HepG2 (cell line): ENCODE measurements at regions of chr16 and their contacts with region 1.

Region 1: DNA sequence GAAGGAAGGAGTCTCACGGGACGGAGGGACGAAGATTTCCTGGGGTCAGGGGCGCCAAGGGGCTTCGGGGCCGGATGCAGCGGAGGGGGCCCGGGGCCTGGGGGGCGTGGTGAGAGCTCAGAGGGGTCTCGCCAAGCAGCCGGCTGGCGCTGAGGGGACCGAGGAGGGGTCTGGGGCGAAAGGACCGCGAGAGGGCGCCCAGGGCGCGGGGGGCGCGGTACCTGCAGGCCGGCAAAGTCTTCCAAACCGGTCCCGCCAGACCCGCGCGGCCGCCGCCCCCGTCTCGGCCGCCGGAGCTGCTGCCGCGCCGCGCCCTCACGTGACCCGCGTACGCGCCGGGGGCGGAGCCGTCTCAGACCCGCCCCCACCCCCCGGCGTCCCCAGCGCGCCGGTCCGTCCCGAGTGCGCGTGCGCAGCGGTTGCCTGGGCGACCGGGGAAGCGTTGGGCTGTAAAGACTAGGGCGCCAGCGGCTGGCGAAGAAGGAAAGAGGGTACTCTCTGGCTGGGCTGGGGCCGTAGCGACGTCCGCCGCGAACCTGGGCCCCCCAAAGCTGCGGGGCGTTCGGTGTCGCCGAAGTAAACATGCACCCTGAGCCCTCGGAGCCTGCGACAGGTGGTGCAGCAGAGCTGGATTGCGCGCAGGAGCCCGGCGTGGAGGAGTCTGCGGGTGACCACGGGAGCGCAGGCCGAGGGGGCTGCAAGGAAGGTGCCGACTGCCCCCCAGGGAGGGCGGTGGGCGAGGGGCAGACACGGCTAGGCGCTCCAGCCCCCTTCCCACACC is at the starts of genes DNAAF1 and HSDL1:
- DNase-seq: peak; percentile 83
- ATAC-seq: peak; percentile 74
- H3K4me3 ChIP-seq: peak within 1 kb of the TSS; percentile 90 to 100 (median 92)
- H3K27ac ChIP-seq: peak within 1 kb of the TSS; percentile 55
- H3K4me1 ChIP-seq: peaks cover 39% of the 10 kb centered on the region
- H3K27me3 ChIP-seq: peaks cover 2 to 10% of the 10 kb centered on the region in 2 experiments
- CTCF ChIP-seq: peak; percentile 31
- EP300 ChIP-seq: peak in 1 of 2 experiments; percentile 11; a peak in 1 of 4 replicates
- POLR2A ChIP-seq: peak; percentile 55 to 80
- RAD21 ChIP-seq: peak; percentile 56
- total RNA-seq, gene DNAAF1: 0.04 TPM in 1 of 2 replicates, not detected in the other
- total RNA-seq, gene HSDL1: 41.0 and 49.7 TPM in 2 replicates

Region 2: DNA sequence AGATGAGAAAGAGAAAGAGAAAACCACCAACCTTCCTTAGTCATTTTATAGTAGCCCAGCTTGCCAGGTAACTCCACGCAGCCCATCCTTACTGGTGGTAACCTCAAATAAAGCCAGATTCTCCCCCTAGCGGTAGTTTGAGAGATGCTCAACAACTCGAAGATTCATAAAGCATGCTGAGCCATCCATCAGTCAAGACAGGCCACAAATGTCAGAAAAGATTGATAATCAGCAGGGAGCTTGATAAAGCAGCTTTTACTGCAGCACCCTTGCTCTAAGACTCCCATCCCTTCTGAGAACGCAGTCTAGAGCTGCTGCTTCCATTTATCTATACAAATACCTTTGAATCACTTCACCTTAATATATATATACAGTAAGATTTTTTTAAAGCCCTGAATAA is 788.8 kb before region 1 on chr16:
- CTCF ChIA-PET with region 1: no interaction called
- POLR2A ChIA-PET with region 1: no interaction called
- in situ Hi-C with region 1: no loop called
- intact Hi-C with region 1: no loop called
- DNase-seq: peak; percentile 56
- ATAC-seq: peak; percentile 91
- H3K4me3 ChIP-seq: no peak overlapping the region
- H3K27ac ChIP-seq: no peak overlapping the region
- H3K4me1 ChIP-seq: no peaks in the 10 kb centered on the region
- H3K27me3 ChIP-seq: no peaks in the 10 kb centered on the region
- CTCF ChIP-seq: peak; percentile 68
- EP300 ChIP-seq: no peak
- POLR2A ChIP-seq: no peak
- RAD21 ChIP-seq: no peak

Region 3: GRCh38 chr16:84062734-84063640 is 82.1 kb before region 1 on chr16:
- CTCF ChIA-PET with region 1: no interaction called
- POLR2A ChIA-PET with region 1: no interaction called
- in situ Hi-C with region 1: no loop called
- intact Hi-C with region 1: no loop called
- DNase-seq: peak; percentile 59
- ATAC-seq: peak; percentile 97
- H3K4me3 ChIP-seq: no peak overlapping the region
- H3K27ac ChIP-seq: no peak overlapping the region
- H3K4me1 ChIP-seq: no peaks in the 10 kb centered on the region
- H3K27me3 ChIP-seq: no peaks in the 10 kb centered on the region
- CTCF ChIP-seq: peak; percentile 95
- EP300 ChIP-seq: no peak
- POLR2A ChIP-seq: no peak
- RAD21 ChIP-seq: peak; percentile 72

Region 4: GRCh38 chr16:84096115-84097012 is 48.7 kb before region 1 on chr16:
- CTCF ChIA-PET with region 1: interaction called, 3 read pairs
- POLR2A ChIA-PET with region 1: no interaction called
- in situ Hi-C with region 1: no loop called
- intact Hi-C with region 1: loop called (anchors 1 kb)
- DNase-seq: peak; percentile 95
- ATAC-seq: peak; percentile 100
- H3K4me3 ChIP-seq: no peak overlapping the region
- H3K27ac ChIP-seq: no peak overlapping the region
- H3K4me1 ChIP-seq: peaks cover 19% of the 10 kb centered on the region
- H3K27me3 ChIP-seq: no peaks in the 10 kb centered on the region
- CTCF ChIP-seq: no peak
- EP300 ChIP-seq: peak; percentile 67 to 72; a peak in 3 of 4 replicates
- POLR2A ChIP-seq: no peak
- RAD21 ChIP-seq: 0 out of 2 replicates have a peak, but pooled peaks have one; percentile 9

Region 5: DNA sequence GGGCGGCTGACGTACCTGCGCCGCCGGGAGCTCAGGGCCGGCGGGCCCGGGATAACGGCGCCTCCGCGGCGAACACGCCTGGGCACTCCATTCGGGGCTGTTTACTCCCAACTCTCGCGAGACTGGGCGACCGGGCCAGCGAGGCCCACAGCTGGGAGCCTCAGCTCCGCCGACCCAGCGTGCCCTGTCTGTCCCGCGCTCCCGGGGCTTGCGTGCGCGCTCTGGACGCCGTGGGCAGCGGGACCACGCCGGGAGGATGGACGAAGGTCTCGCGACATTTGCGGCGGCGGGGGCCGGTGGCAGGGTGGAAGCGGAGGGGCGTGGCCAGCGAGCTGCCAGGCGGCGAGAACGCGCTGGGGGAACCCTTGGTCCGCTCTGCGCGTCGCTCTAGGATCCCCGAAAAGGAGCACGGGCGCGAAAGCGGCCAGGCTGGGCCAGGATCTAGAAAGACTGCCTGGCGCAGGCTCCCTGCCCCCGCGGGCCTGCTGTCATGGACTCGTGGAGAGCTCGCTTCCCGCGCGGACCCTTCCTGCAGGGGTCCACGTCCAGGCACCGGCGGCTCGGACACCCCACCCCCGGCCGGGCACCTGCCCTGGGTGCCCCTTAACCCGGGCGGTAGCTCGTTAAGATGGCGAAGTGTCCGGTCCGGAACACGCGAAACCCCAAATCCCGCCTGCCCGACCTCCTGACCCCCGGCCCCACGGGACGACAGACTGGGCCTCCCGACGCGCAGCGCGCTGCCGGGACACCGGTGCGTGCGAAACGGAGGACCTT is 28.1 kb before region 1 on chr16 and contains the start of gene MBTPS1:
- CTCF ChIA-PET with region 1: interaction called, 5 read pairs
- POLR2A ChIA-PET with region 1: interaction called, 142 read pairs
- in situ Hi-C with region 1: no loop called
- intact Hi-C with region 1: loop called (anchors 1 kb)
- DNase-seq: peak; percentile 97
- ATAC-seq: peak; percentile 96
- H3K4me3 ChIP-seq: peak within 1 kb of the TSS; percentile 92 to 99 (median 93)
- H3K27ac ChIP-seq: peak within 1 kb of the TSS; percentile 85
- H3K4me1 ChIP-seq: peaks cover 30% of the 10 kb centered on the region
- H3K27me3 ChIP-seq: peaks cover 0 to 3% of the 10 kb centered on the region in 2 experiments; a peak in 1 of 5 replicates
- CTCF ChIP-seq: peak; percentile 32
- EP300 ChIP-seq: no peak; a peak in 1 of 4 replicates
- POLR2A ChIP-seq: peak; percentile 92 to 95
- RAD21 ChIP-seq: peak; percentile 37
- total RNA-seq, gene MBTPS1: 42.0 and 56.7 TPM in 2 replicates

Region 6: GRCh38 chr16:84175350-84176081 is 30.5 kb after region 1 on chr16:
- CTCF ChIA-PET with region 1: interaction called, 6 read pairs
- POLR2A ChIA-PET with region 1: interaction called, 5 read pairs
- in situ Hi-C with region 1: no loop called
- intact Hi-C with region 1: loop called (anchors 2 kb)
- DNase-seq: peak; percentile 65
- ATAC-seq: peak; percentile 80
- H3K4me3 ChIP-seq: peak overlapping the region in 1 of 3 experiments; percentile 61; a peak in 1 of 6 replicates
- H3K27ac ChIP-seq: no peak overlapping the region
- H3K4me1 ChIP-seq: peaks cover 37% of the 10 kb centered on the region
- H3K27me3 ChIP-seq: peaks cover 1 to 6% of the 10 kb centered on the region in 2 experiments; a peak in 3 of 5 replicates
- CTCF ChIP-seq: peak; percentile 94
- EP300 ChIP-seq: no peak
- POLR2A ChIP-seq: no peak
- RAD21 ChIP-seq: peak; percentile 79